PC-9 (cell line): ENCODE measurements at regions of chrX and their contacts with region 1.

Region 1: DNA sequence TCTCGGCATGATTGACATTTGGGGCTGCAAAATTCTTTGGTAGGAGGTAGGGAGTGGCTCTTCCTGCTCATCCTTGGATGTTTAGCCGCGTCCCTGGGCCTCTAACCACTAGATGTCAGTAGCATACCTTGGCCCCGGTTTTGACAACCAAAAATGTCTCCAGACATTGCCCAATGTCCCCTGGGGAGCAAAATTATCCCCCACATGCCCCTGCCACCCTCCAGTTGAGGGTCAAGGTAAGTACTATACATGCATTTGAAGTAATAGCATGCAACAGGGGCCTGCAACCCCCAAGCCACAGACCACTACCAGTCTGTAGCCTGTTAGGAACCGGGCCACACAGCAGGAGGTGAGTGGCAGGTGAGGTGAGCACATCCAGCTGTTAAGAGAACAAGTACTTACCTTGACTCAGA is 17.6 kb upstream of the KIAA1210 start:
- DNase-seq: peak in 1 of 2 experiments; percentile 23
- H3K4me3 ChIP-seq: no peak overlapping the region
- H3K27ac ChIP-seq: no peak overlapping the region
- H3K4me1 ChIP-seq: no peaks in the 10 kb centered on the region
- H3K27me3 ChIP-seq: no peaks in the 10 kb centered on the region
- CTCF ChIP-seq: peak; percentile 57

Region 2: DNA sequence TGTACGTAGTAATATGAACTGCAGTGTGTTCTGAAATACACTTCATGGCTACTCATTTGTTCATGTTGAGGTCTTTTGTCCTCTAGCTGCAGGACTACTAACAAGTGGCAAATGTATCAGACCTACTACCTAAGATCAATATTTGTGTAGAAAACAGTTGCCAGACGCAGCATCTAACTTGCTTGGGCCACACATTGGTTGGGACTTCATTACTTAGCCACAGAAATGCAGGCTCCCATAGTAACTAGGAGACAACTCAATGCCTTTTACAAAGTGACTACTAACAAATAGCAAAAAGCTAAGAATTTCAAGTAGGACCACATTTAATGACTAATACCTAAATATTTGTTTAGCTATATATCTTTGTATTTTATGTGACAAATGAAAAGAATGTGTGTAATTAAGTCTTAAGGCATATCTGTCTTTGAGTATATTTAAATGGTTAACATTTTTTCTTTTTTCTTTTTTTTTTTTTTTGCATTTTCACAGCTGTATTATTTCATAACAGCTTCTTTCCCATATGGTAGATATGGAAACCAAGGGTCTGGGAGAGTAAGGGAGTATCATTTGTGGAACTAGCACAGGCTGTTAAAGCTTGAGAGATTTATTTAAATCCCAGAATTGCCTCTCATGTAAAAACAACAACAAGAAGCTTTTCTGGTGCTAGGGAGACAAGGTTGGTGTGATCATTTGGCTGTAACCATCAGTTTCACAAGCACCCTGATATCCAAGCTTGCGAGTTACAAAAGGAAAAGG is 69.8 kb before region 1 on chrX:
- CTCF ChIA-PET with region 1: no interaction called
- POLR2A ChIA-PET with region 1: no interaction called
- intact Hi-C with region 1: no loop called
- DNase-seq: peak in 1 of 2 experiments; percentile 58
- H3K4me3 ChIP-seq: no peak overlapping the region
- H3K27ac ChIP-seq: no peak overlapping the region
- H3K4me1 ChIP-seq: no peaks in the 10 kb centered on the region
- H3K27me3 ChIP-seq: no peaks in the 10 kb centered on the region; the same call in 1 of the 2 replicates
- CTCF ChIP-seq: no peak

Region 3: DNA sequence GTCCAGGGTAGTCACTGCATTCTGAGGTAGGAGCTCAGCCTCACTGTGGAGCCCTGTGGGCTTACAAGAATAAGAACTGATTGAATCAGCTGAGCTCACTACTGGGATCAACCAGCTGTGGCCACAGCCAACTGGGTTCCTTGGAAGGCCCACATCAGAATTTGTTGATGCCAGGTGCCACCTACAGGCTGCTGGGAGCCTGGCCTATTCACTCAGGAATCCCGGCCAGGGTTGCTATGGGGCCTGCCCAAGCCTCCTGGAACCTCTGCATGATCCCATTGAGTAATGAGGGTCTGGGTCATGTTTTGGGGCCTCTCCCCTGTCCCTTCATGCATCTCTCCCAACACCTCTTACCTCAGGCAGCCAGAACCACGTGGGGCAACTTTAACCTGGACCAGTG is 36.2 kb after region 1 on chrX:
- CTCF ChIA-PET with region 1: interaction called, 5 read pairs
- POLR2A ChIA-PET with region 1: no interaction called
- intact Hi-C with region 1: loop called (anchors 5 kb)
- DNase-seq: peak in 1 of 2 experiments; percentile 16
- H3K4me3 ChIP-seq: no peak overlapping the region
- H3K27ac ChIP-seq: no peak overlapping the region
- H3K4me1 ChIP-seq: no peaks in the 10 kb centered on the region
- H3K27me3 ChIP-seq: no peaks in the 10 kb centered on the region
- CTCF ChIP-seq: peak; percentile 69